ENCODE measurements at regions of chrX and their contacts with region 1.

Region 1: DNA sequence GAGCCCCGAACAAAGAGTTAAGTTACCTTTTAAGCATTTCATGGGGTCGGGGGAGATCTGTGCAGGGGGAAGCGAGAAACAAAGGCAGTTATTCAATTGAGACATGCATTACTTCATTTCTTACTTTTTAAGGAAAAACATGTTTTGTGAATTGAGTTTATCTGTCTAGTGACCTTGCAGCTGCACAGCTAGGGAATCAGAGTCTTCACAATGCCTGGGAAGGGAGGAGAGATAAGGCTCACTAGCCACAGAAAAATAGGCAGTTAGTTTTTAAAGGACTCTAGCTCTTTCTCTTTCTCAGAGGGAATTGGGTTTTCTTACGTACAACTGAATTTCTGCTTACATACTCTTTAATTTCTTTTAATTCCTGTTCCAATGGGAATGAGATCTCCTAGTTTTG is 26.2 kb upstream of the ZBTB33 start:
- DNase-seq: no peak
- H3K4me3 ChIP-seq: no peak overlapping the region
- H3K27ac ChIP-seq: no peak overlapping the region
- H3K4me1 ChIP-seq: no peaks in the 10 kb centered on the region
- H3K27me3 ChIP-seq: no peaks in the 10 kb centered on the region
- CTCF ChIP-seq: no peak

Region 2: DNA sequence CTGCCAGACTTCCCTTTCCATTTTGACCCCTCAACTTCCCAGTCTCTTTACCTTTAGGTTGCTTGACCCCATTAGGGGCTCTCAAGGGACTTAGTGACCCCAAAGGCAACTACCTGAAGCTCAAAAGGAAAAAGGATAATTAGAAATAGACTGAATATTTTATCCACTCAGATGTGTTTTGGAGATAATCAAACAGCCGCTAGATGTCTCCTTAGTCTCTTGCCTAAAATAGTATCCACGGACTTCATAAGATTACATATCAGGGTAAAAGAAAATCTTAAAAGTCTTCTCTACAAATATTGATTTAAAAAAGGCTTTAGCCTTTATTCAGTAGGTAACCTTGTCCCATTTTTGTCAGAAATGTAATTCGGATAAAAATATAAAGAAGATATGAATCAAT is 86.9 kb before region 1 on chrX:
- CTCF ChIA-PET with region 1: interaction called, 11 read pairs
- POLR2A ChIA-PET with region 1: no interaction called
- intact Hi-C with region 1: no loop called
- DNase-seq: no peak
- H3K4me3 ChIP-seq: no peak overlapping the region
- H3K27ac ChIP-seq: no peak overlapping the region
- H3K4me1 ChIP-seq: no peaks in the 10 kb centered on the region
- H3K27me3 ChIP-seq: no peaks in the 10 kb centered on the region
- CTCF ChIP-seq: peak; percentile 32; the same call in 1 of the 2 replicates

Region 3: GRCh38 chrX:120236687-120237479 is 12.5 kb after region 1 on chrX:
- CTCF ChIA-PET with region 1: no interaction called
- POLR2A ChIA-PET with region 1: interaction called, 10 read pairs
- intact Hi-C with region 1: no loop called
- DNase-seq: no peak
- H3K4me3 ChIP-seq: no peak overlapping the region
- H3K27ac ChIP-seq: no peak overlapping the region
- H3K4me1 ChIP-seq: no peaks in the 10 kb centered on the region
- H3K27me3 ChIP-seq: no peaks in the 10 kb centered on the region
- CTCF ChIP-seq: no peak

Measured in PC-9 (cell line).